ENCODE measurements at regions of chr17 and their contacts with region 1.

Region 1: DNA sequence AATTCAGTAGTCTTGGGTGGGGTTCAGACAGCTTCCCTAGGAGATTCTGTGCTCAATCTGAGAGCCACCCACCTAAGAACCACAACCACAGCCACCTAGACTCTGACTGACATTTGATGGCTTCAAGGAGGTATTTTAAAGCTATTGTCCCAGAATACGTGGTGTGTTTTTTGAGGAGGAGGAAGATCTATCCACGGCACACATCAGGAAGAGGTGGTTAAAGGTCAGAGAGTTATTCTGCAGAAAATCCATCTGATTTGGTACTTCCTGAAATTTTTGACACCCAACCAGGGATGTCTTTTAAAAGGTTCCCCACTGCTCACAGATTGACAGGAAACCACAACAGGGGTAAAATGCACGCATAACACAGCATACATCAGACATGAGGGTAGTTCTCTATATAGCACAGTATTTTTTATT is 25.1 kb downstream of the SMARCE1 start:
- DNase-seq: peak; percentile 3
- H3K4me3 Mint-ChIP-seq: no peak overlapping the region
- H3K27ac Mint-ChIP-seq: no peak overlapping the region
- H3K4me1 Mint-ChIP-seq: peaks cover 14% of the 10 kb centered on the region
- H3K27me3 Mint-ChIP-seq: peaks cover 56% of the 10 kb centered on the region
- CTCF ChIP-seq: no peak

Region 2: GRCh38 chr17:40433551-40434415 is 188.7 kb before region 1 on chr17:
- CTCF ChIA-PET with region 1: no interaction called
- intact Hi-C with region 1: no loop called
- DNase-seq: peak; percentile 94
- H3K4me3 Mint-ChIP-seq: no peak overlapping the region
- H3K27ac Mint-ChIP-seq: no peak overlapping the region
- H3K4me1 Mint-ChIP-seq: no peaks in the 10 kb centered on the region
- H3K27me3 Mint-ChIP-seq: peaks cover 43% of the 10 kb centered on the region
- CTCF ChIP-seq: no peak

Region 3: DNA sequence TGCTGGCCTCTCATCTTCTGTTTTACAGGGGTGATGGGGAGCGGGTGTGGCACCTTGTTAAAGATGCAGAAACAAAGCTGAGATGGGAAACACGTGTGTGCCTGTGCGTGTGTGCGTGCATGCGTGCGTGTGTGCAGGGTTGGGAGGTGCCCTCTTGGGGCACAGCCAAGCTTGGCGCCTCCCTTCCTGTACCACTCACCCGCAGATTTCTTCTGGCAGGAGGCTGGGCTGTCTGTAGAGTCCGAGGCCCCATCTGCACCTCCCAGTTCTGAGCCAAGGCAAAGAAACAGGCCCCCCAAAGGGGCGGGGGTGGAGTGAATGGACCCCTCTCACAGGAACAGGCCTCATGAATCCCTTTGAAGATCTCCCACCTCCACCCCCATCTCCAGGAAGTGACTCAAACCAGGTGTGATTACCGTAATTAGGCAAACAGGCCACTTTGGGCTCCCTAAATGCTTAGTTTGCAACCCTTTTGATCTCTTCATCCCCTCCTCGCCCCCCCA is 142.0 kb before region 1 on chr17:
- CTCF ChIA-PET with region 1: interaction called, 13 read pairs
- intact Hi-C with region 1: no loop called
- DNase-seq: peak; percentile 91
- H3K4me3 Mint-ChIP-seq: no peak overlapping the region
- H3K27ac Mint-ChIP-seq: no peak overlapping the region
- H3K4me1 Mint-ChIP-seq: peaks cover 25% of the 10 kb centered on the region
- H3K27me3 Mint-ChIP-seq: peaks cover 36% of the 10 kb centered on the region
- CTCF ChIP-seq: no peak

Region 4: GRCh38 chr17:40598663-40599467 is 23.7 kb before region 1 on chr17:
- CTCF ChIA-PET with region 1: interaction called, 69 read pairs
- intact Hi-C with region 1: no loop called
- DNase-seq: no peak
- H3K4me3 Mint-ChIP-seq: no peak overlapping the region
- H3K27ac Mint-ChIP-seq: no peak overlapping the region
- H3K4me1 Mint-ChIP-seq: peaks cover 10% of the 10 kb centered on the region
- H3K27me3 Mint-ChIP-seq: peaks cover 37% of the 10 kb centered on the region
- CTCF ChIP-seq: no peak

Region 5: DNA sequence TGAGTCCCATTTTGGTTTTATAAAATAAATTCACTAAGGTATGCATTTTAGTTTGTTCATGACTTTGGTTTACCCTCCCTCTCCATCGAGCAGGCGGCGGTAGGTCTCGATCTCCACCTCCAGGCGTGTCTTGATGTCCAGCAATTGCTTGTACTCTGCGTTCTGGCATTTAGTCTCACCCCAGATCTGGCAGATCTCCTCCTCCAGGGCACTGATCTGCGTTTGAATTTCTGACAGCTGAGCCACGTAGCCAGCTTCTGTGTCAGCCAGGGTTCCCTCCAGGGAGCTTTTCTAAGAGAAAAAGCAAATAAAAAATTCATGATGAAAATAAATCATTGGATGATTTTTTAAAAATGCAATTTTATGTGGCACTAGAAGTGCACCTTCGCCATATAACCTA is 76.9 kb after region 1 on chr17:
- CTCF ChIA-PET with region 1: interaction called, 79 read pairs
- intact Hi-C with region 1: no loop called
- DNase-seq: no peak
- H3K4me3 Mint-ChIP-seq: no peak overlapping the region
- H3K27ac Mint-ChIP-seq: no peak overlapping the region
- H3K4me1 Mint-ChIP-seq: peaks cover 46% of the 10 kb centered on the region
- H3K27me3 Mint-ChIP-seq: peaks cover 29% of the 10 kb centered on the region
- CTCF ChIP-seq: no peak

Region 6: DNA sequence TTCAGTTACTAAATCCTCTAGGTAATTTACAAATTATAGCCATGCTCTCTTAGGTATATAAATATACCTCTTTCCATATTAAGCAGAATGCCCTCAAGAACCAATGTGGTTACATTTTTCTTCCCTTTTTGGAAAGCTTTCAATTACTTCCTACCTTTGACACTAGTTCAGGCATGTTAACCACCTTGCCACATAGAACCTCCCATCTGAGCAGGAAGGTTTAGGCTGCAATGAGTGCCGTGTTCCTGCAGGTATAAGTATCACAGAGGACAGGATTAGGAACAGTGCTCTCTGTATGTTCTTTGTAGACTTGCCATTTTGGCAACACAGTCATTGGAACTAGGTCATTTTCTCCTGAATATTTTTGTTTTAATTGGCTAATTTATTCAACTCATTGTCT is 112.5 kb after region 1 on chr17:
- CTCF ChIA-PET with region 1: interaction called, 21 read pairs
- intact Hi-C with region 1: no loop called
- DNase-seq: no peak
- H3K4me3 Mint-ChIP-seq: no peak overlapping the region
- H3K27ac Mint-ChIP-seq: no peak overlapping the region
- H3K4me1 Mint-ChIP-seq: no peaks in the 10 kb centered on the region
- H3K27me3 Mint-ChIP-seq: peaks cover 88% of the 10 kb centered on the region
- CTCF ChIP-seq: no peak

Region 7: DNA sequence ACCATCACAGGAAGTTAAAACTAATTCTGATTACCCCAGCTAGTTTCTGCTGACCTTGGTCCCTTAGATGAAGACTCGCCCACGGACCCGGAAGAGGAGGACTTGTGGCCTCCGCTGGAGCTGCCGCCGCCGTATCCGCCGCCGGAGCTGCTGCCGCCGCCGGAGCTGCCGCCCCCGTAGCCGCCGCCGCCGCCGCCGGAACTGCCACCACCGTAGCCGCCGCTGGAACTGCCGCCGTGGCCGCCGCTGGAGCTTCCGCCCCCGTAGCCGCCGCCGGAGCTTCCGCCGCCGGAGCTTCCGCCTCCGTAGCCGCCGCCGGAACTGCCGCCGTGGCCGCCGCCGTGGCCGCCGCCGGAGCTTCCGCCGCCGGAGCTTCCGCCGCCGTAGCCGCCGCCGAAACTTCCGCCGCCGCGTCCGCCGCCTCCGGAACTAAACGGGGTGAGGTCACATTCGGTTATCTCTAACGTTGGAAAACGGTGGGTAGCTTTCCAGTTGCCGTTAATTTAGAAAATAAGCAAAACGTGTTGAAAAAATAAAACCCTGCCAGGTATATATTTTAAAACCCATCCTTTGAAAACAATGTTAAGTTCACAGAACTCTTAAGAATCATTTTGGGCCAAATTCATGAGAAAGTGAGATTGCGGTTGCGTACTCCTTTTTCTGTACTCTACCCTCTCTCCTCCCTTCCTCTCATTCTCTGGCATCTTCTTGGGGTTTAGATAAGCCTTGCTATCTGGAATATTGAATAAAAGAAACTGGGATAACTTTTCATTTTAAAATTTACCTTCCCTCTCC is 196.4 kb after region 1 on chr17:
- CTCF ChIA-PET with region 1: interaction called, 11 read pairs
- intact Hi-C with region 1: no loop called
- DNase-seq: peak; percentile 100
- H3K4me3 Mint-ChIP-seq: peak overlapping the region; percentile 80
- H3K27ac Mint-ChIP-seq: peak overlapping the region; percentile 92
- H3K4me1 Mint-ChIP-seq: peaks cover 31% of the 10 kb centered on the region
- H3K27me3 Mint-ChIP-seq: no peaks in the 10 kb centered on the region
- CTCF ChIP-seq: no peak

Measured in Calu3 (cell line).